CD14-positive monocyte (primary cell): ENCODE measurements at regions of chr17 and their contacts with region 1.

Region 1: GRCh38 chr17:75182569-75183450 is at the start of gene SUMO2:
- DNase-seq: peak; percentile 92 to 97 (median 96)
- H3K4me3 ChIP-seq: peak within 1 kb of the TSS; percentile 85 to 96 (median 93)
- H3K4me3 Mint-ChIP-seq: peak within 1 kb of the TSS; percentile 89 to 96
- H3K27ac ChIP-seq: peak within 1 kb of the TSS; percentile 92 to 96
- H3K27ac Mint-ChIP-seq: peak within 1 kb of the TSS; percentile 96 to 99 (median 97)
- H3K4me1 ChIP-seq: peaks cover 17 to 21% of the 10 kb centered on the region in 2 donors
- H3K4me1 Mint-ChIP-seq: peaks cover 22% of the 10 kb centered on the region
- H3K27me3 ChIP-seq: no peaks in the 10 kb centered on the region
- H3K27me3 Mint-ChIP-seq: peaks cover 0 to 2% (median 0%) of the 10 kb centered on the region in 3 donors
- CTCF ChIP-seq: peak; percentile 14
- polyA plus RNA-seq, gene SUMO2: 64.9 to 318 (median 282) TPM

Region 2: GRCh38 chr17:75046582-75047289 is 136.1 kb before region 1 on chr17 and contains the starts of genes ATP5PD and KCTD2:
- intact Hi-C with region 1: loop called (anchors 5 kb)
- DNase-seq: peak; percentile 94 to 96 (median 94)
- H3K4me3 ChIP-seq: peak within 1 kb of the TSS; percentile 57 to 100 (median 97)
- H3K4me3 Mint-ChIP-seq: peak within 1 kb of the TSS; percentile 92 to 94
- H3K27ac ChIP-seq: peak within 1 kb of the TSS; percentile 96
- H3K27ac Mint-ChIP-seq: peak within 1 kb of the TSS; percentile 93 to 98 (median 97)
- H3K4me1 ChIP-seq: peaks cover 18 to 25% of the 10 kb centered on the region in 2 donors
- H3K4me1 Mint-ChIP-seq: peaks cover 23% of the 10 kb centered on the region
- H3K27me3 ChIP-seq: no peaks in the 10 kb centered on the region
- H3K27me3 Mint-ChIP-seq: peaks cover 0 to under 1% (median 0%) of the 10 kb centered on the region in 3 donors
- CTCF ChIP-seq: no peak
- polyA plus RNA-seq, gene ATP5PD: 139 to 451 (median 437) TPM
- polyA plus RNA-seq, gene KCTD2: 2.8 to 17.0 (median 2.9) TPM

Region 3: DNA sequence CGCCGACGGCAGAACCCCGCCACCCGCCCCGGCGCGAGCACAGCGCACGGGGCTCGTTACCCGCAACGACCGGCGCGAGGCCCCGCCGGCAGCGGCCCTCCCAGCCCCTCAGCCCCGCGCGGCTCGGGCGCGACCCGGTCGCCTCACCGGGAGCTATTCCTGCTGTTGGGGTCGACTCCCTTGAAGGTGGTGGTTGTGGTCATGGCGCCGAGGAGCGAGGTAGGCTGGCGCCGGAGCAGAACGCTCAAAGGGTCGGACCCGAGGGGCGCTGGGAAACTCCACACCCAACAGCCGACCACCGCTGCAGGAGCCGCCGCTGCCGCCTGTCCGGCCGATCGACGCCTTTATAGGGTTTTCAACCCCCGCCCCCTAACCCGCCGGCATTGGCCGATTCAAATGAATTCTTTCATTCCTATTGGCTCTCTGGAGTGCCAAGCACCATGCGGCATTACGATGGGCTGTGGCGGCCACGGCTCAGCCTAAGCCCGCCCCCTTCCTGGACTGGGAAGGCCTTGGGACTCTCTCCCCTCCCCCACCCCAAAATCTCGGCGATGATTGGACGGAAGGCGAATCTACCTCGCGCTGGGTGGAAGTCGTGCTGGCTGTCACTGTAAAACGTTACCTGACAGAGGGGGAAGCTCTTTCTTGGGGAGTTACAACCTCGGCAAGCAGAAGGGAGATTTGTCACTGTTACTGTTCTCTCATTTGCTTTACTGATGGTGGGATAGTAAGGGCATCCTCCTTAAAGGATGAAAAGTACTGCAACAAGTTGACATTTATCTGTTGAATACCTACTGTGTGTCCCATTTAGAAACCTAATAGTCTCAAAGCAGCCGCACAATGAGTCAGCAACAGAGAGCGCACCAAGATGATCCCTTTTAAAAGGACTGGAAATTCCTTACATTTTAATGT is 28.4 kb before region 1 on chr17 and contains the start of gene JPT1:
- intact Hi-C with region 1: loop called in 1 of 2 experiments (anchors 2 kb)
- DNase-seq: peak; percentile 97 to 99 (median 97)
- H3K4me3 ChIP-seq: peak within 1 kb of the TSS; percentile 61 to 97 (median 69)
- H3K4me3 Mint-ChIP-seq: peak within 1 kb of the TSS; percentile 94 to 95
- H3K27ac ChIP-seq: peak within 1 kb of the TSS in 1 of 2 donors; percentile 72
- H3K27ac Mint-ChIP-seq: peak within 1 kb of the TSS; percentile 75 to 90 (median 78)
- H3K4me1 ChIP-seq: peaks cover 14 to 22% of the 10 kb centered on the region in 2 donors
- H3K4me1 Mint-ChIP-seq: peaks cover 23% of the 10 kb centered on the region
- H3K27me3 ChIP-seq: no peaks in the 10 kb centered on the region
- H3K27me3 Mint-ChIP-seq: peaks cover 0 to 2% (median 0%) of the 10 kb centered on the region in 3 donors
- CTCF ChIP-seq: no peak
- polyA plus RNA-seq, gene JPT1: 79.7 to 181 (median 156) TPM

Region 4: DNA sequence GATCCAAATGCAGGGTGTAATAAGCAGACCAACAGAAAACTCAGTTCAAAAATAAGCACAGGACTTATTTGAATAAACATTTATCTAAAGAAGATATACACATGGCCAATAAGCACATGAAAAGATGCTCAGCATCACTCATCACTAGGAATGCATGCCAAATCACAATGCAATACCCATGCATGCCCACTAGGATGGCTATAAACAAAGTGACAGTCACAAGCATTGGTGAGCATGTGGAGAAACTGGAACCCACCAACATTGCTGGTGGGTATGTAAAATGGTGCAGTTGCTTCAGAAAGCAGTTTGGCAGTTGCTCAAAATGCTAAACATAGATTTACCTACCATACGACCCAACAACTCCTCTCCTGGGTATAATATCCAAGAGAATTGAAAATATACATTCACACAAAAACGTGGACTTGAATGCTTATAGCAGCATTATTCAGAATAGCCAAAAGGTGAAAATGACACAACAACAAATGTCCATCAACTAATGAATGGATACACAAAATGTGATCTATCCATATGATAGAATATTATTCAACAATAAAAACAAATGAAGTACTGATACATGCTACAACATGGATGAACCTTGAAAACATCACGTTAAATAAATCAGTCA is 1250.0 kb after region 1 on chr17:
- intact Hi-C with region 1: no loop called
- DNase-seq: no peak
- H3K4me3 ChIP-seq: no peak overlapping the region
- H3K4me3 Mint-ChIP-seq: no peak overlapping the region
- H3K27ac ChIP-seq: no peak overlapping the region
- H3K27ac Mint-ChIP-seq: no peak overlapping the region
- H3K4me1 ChIP-seq: no peaks in the 10 kb centered on the region
- H3K4me1 Mint-ChIP-seq: peaks cover 14% of the 10 kb centered on the region
- H3K27me3 ChIP-seq: no peaks in the 10 kb centered on the region
- H3K27me3 Mint-ChIP-seq: peaks cover 0 to 1% (median 0%) of the 10 kb centered on the region in 3 donors
- CTCF ChIP-seq: peak; percentile 71